HCT116 (cell line): ENCODE measurements at regions of chr13 and their contacts with region 1.

Region 1: DNA sequence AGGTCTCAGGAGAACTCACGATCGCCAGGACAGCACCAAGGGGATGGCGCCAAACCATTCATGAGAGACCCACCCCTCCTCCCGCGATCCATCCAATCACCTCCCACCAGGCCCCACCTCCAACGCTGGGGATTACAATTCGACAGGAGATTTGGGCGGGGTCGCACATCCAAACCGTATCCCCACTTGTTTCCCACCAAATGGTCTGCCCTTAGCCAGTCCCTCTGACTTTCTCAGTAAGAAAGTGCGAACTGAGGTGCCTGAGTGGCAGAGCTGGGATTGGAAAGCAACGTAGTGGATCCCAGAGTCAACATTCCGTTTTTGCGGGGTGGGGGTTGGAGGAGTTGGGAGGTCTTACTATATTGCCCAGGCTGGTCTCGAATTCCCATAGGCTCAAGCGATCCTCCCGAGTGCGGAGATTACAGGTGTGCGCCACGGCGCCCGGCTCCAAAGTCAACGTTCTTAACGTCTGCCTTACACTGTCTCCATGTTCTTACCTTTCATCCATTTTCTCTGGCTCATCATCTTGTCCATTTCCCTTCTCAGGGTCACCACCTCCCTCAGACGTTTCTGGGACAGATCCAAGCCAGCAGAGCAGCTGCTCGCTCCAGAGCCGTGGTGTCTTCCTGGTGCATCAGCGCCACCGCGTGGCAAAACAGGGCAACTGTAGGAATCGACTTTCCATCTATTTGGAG is 102.7 kb upstream of the ABCC4 start:
- DNase-seq: peak; percentile 61
- ATAC-seq: peak; percentile 92
- H3K4me3 ChIP-seq: no peak overlapping the region
- H3K27ac ChIP-seq: no peak overlapping the region
- H3K4me1 ChIP-seq: peaks cover 0 to 5% of the 10 kb centered on the region in 2 experiments; a peak in 1 of 4 replicates
- H3K27me3 ChIP-seq: no peaks in the 10 kb centered on the region
- CTCF ChIP-seq: peak; percentile 82 to 97 (median 90)
- POLR2A ChIP-seq: no peak
- RAD21 ChIP-seq: peak; percentile 96

Region 2: GRCh38 chr13:94435604-94436226 is 968.3 kb before region 1 on chr13:
- CTCF ChIA-PET with region 1: no interaction called
- POLR2A ChIA-PET with region 1: no interaction called
- RAD21 ChIA-PET with region 1: no interaction called
- intact Hi-C with region 1: loop called (anchors 10 kb)
- DNase-seq: peak; percentile 34
- ATAC-seq: peak; percentile 79
- H3K4me3 ChIP-seq: no peak overlapping the region
- H3K27ac ChIP-seq: no peak overlapping the region
- H3K4me1 ChIP-seq: no peaks in the 10 kb centered on the region
- H3K27me3 ChIP-seq: peaks cover 21% of the 10 kb centered on the region; the same call in 1 of the 2 replicates
- CTCF ChIP-seq: peak; percentile 38 to 67 (median 47); a peak in 5 of 6 replicates
- POLR2A ChIP-seq: no peak
- RAD21 ChIP-seq: peak; percentile 75

Region 3: DNA sequence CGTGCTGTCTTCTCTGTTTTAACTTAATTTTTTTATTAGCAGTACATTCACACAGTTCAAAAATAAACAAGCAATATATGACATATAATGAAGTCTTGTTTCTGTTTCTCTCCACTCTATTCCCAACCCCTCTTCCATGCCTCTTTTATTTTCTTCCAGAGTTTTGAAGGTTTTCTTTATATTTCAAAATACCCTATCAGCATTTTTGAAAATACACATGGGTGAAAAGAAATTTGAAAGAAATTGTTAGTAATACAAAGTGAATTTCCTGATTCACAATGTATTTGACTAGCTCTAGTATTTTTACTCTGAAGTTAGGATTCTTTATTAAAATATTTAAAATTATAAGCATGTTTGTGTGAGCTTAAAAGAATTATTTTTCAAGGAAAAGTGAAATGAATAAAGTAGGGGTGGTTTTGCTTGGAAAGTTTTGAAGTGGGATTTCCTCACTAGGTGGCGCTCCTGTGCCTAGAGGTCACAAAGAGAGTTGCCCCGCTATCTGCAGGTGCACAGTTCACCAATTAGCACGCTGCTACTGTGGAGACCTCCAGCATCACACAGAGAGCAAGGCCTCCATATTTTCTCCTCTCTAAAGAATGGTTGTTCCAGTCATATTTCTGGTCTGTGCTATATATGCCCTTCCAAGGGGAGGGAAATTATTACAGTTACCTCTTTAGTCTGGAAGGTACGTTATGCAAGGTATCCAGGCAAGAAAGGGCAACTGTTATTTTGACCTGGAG is 729.2 kb before region 1 on chr13:
- CTCF ChIA-PET with region 1: interaction called, 6 read pairs
- POLR2A ChIA-PET with region 1: no interaction called
- RAD21 ChIA-PET with region 1: no interaction called
- intact Hi-C with region 1: loop called (anchors 5 kb)
- DNase-seq: peak; percentile 54
- ATAC-seq: peak; percentile 92
- H3K4me3 ChIP-seq: no peak overlapping the region
- H3K27ac ChIP-seq: no peak overlapping the region
- H3K4me1 ChIP-seq: no peaks in the 10 kb centered on the region
- H3K27me3 ChIP-seq: peaks cover 21% of the 10 kb centered on the region; the same call in 1 of the 2 replicates
- CTCF ChIP-seq: peak; percentile 36 to 80 (median 72); a peak in 5 of 6 replicates
- POLR2A ChIP-seq: no peak
- RAD21 ChIP-seq: peak; percentile 63

Region 4: GRCh38 chr13:95239283-95239682 is 164.7 kb before region 1 on chr13:
- CTCF ChIA-PET with region 1: no interaction called
- POLR2A ChIA-PET with region 1: no interaction called
- RAD21 ChIA-PET with region 1: no interaction called
- intact Hi-C with region 1: no loop called
- DNase-seq: no peak
- ATAC-seq: no peak
- H3K4me3 ChIP-seq: no peak overlapping the region
- H3K27ac ChIP-seq: no peak overlapping the region
- H3K4me1 ChIP-seq: no peaks in the 10 kb centered on the region; a peak in 1 of 4 replicates
- H3K27me3 ChIP-seq: no peaks in the 10 kb centered on the region
- CTCF ChIP-seq: no peak
- POLR2A ChIP-seq: no peak
- RAD21 ChIP-seq: no peak

Region 5: DNA sequence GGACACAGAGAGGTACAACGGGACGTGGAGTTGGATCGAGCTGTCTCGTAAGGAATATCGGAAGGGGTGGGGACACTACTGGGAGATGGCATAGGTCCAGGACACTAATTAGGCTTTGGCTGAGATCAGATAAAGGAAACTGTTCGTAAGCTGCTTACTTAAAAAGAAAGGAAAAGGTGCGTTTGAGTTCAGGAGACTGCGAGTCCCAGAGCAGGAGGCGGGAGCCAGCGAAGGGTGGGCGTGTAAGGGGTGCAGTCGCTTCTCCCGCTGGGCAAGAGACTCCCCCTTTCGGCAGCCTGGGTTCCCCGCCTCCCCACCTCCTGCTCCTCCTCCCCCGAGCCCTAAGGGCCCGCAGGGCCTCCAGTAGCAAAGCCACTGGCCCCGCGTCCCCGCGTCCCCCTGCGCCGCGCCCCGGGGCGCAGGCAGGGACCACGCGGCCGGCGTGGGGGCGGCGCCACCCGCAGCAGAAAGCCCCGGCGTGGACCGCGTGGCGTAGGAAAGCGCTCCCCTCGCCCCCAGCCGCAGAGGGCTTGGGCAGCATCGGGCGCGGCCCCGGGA is 103.3 kb before region 1 on chr13:
- CTCF ChIA-PET with region 1: interaction called, 29 read pairs
- POLR2A ChIA-PET with region 1: no interaction called
- RAD21 ChIA-PET with region 1: interaction called, 4 to 11 read pairs
- intact Hi-C with region 1: loop called (anchors 1 kb)
- DNase-seq: peak; percentile 23
- ATAC-seq: peak; percentile 53
- H3K4me3 ChIP-seq: peak overlapping the region; percentile 55 to 82
- H3K27ac ChIP-seq: peak overlapping the region; percentile 96
- H3K4me1 ChIP-seq: peaks cover 36 to 56% of the 10 kb centered on the region in 2 experiments
- H3K27me3 ChIP-seq: no peaks in the 10 kb centered on the region
- CTCF ChIP-seq: no peak
- POLR2A ChIP-seq: peak; percentile 11
- RAD21 ChIP-seq: no peak

Region 6: GRCh38 chr13:95564733-95565291 is 160.8 kb after region 1 on chr13:
- CTCF ChIA-PET with region 1: interaction called, 16 read pairs
- POLR2A ChIA-PET with region 1: no interaction called
- RAD21 ChIA-PET with region 1: interaction called in 1 of 2 experiments, 5 read pairs
- intact Hi-C with region 1: no loop called
- DNase-seq: no peak
- ATAC-seq: no peak
- H3K4me3 ChIP-seq: no peak overlapping the region
- H3K27ac ChIP-seq: no peak overlapping the region
- H3K4me1 ChIP-seq: no peaks in the 10 kb centered on the region
- H3K27me3 ChIP-seq: no peaks in the 10 kb centered on the region
- CTCF ChIP-seq: no peak
- POLR2A ChIP-seq: no peak
- RAD21 ChIP-seq: no peak